ENCODE measurements at regions of chr18 and their contacts with region 1.

Region 1: GRCh38 chr18:77316008-77316407 is 66.4 kb downstream of the GALR1 start:
- DNase-seq: no peak
- ATAC-seq: no peak
- H3K4me3 ChIP-seq: no peak overlapping the region
- H3K27ac ChIP-seq: no peak overlapping the region
- H3K4me1 ChIP-seq: peaks cover 2% of the 10 kb centered on the region
- H3K27me3 ChIP-seq: no peaks in the 10 kb centered on the region
- CTCF ChIP-seq: no peak

Region 2: GRCh38 chr18:77147418-77147852 is 168.6 kb before region 1 on chr18:
- intact Hi-C with region 1: loop called in 1 of 2 experiments (anchors 10 kb)
- DNase-seq: no peak
- ATAC-seq: no peak
- H3K4me3 ChIP-seq: no peak overlapping the region
- H3K27ac ChIP-seq: no peak overlapping the region
- H3K4me1 ChIP-seq: no peaks in the 10 kb centered on the region
- H3K27me3 ChIP-seq: no peaks in the 10 kb centered on the region
- CTCF ChIP-seq: no peak